K562 (cell line): ENCODE measurements at regions of chr15 and their contacts with region 1.

Region 1: GRCh38 chr15:44971036-44971435 is 14.5 kb downstream of the TERB2 start:
- DNase-seq: no peak
- ATAC-seq: no peak
- H3K4me3 ChIP-seq: no peak overlapping the region
- H3K27ac ChIP-seq: no peak overlapping the region
- H3K4me1 ChIP-seq: no peaks in the 10 kb centered on the region
- H3K27me3 ChIP-seq: no peaks in the 10 kb centered on the region
- CTCF ChIP-seq: no peak
- EP300 ChIP-seq: no peak
- POLR2A ChIP-seq: no peak
- RAD21 ChIP-seq: no peak

Region 2: GRCh38 chr15:45027220-45027619 is 56.2 kb after region 1 on chr15:
- CTCF ChIA-PET with region 1: no interaction called
- POLR2A ChIA-PET with region 1: no interaction called
- in situ Hi-C with region 1: loop called (anchors 5 kb)
- intact Hi-C with region 1: no loop called
- DNase-seq: peak in 2 of 4 experiments; percentile 41 to 55
- ATAC-seq: peak; percentile 10; the same call in 1 of the 3 replicates
- H3K4me3 ChIP-seq: no peak overlapping the region
- H3K27ac ChIP-seq: peak overlapping the region; percentile 33
- H3K4me1 ChIP-seq: peaks cover 19 to 36% of the 10 kb centered on the region in 2 experiments; a peak in 4 of 5 replicates
- H3K27me3 ChIP-seq: no peaks in the 10 kb centered on the region
- CTCF ChIP-seq: no peak
- EP300 ChIP-seq: no peak
- POLR2A ChIP-seq: no peak
- RAD21 ChIP-seq: no peak

Region 3: DNA sequence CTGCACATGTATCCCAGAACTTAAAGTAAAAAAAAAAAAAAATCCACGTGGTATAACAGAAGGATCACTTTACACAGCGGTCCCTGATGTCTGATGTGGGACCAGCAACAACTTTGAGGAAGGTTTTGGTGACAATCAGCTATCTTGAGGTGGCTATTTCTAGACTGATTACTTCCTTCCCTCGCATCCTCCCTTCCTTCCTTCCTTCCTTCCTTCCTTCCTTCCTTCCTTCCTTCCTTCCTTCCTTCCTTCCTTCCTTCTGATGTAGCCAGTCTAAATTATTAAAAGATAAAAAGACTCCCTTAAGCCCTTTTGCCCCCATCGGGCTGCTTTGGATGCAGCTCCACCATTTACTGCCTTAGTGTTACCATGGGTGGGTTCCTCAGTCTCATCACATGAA is 66.9 kb after region 1 on chr15:
- CTCF ChIA-PET with region 1: interaction called, 9 read pairs
- POLR2A ChIA-PET with region 1: interaction called, 4 read pairs
- in situ Hi-C with region 1: no loop called
- intact Hi-C with region 1: loop called (anchors 1 kb)
- DNase-seq: no peak
- ATAC-seq: no peak
- H3K4me3 ChIP-seq: no peak overlapping the region
- H3K27ac ChIP-seq: no peak overlapping the region
- H3K4me1 ChIP-seq: peaks cover 0 to 8% of the 10 kb centered on the region in 2 experiments; a peak in 4 of 5 replicates
- H3K27me3 ChIP-seq: no peaks in the 10 kb centered on the region
- CTCF ChIP-seq: no peak
- EP300 ChIP-seq: no peak
- POLR2A ChIP-seq: no peak
- RAD21 ChIP-seq: no peak

Region 4: DNA sequence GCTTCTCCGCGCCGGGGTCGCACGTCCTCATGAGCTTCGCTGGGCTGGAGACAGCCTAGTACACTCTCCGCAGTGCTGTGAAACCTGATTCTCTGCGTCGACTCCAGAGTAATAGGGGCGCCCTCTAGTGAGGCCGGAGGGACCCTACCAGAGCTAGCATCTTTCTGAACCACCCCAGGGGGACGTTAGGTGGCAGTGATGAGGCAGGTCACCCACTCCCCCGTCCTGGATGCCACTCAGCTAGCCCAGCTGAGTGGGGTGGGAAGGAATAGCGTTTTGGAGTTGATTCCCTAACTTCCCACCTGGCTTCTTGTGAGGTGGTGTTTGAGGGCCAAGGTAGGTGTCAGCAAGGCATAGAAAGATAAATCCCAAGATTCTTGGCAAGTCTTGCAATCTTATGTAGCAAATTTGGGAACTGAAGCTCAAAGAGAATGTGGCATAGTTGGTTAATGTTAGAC is 147.1 kb after region 1 on chr15:
- CTCF ChIA-PET with region 1: no interaction called
- POLR2A ChIA-PET with region 1: no interaction called
- in situ Hi-C with region 1: loop called (anchors 25 kb)
- intact Hi-C with region 1: loop called (anchors 2 kb)
- DNase-seq: peak; percentile 93 to 95 (median 94)
- ATAC-seq: peak; percentile 100
- H3K4me3 ChIP-seq: no peak overlapping the region
- H3K27ac ChIP-seq: no peak overlapping the region
- H3K4me1 ChIP-seq: peaks cover 0 to 23% of the 10 kb centered on the region in 2 experiments; a peak in 3 of 5 replicates
- H3K27me3 ChIP-seq: peaks cover 6 to 38% of the 10 kb centered on the region in 2 experiments; a peak in 4 of 5 replicates
- CTCF ChIP-seq: peak; percentile 100
- EP300 ChIP-seq: 0 out of 2 replicates have a peak, but pooled peaks have one; percentile 38
- POLR2A ChIP-seq: no peak
- RAD21 ChIP-seq: peak; percentile 93 to 97